HCT116 (cell line): ENCODE measurements at regions of chr14 and their contacts with region 1.

Region 1: GRCh38 chr14:65164068-65164824 is 61.9 kb upstream of the MAX start:
- DNase-seq: peak; percentile 51
- ATAC-seq: peak; percentile 82
- H3K4me3 ChIP-seq: no peak overlapping the region
- H3K27ac ChIP-seq: no peak overlapping the region
- H3K4me1 ChIP-seq: no peaks in the 10 kb centered on the region
- H3K27me3 ChIP-seq: no peaks in the 10 kb centered on the region
- CTCF ChIP-seq: peak; percentile 44 to 83 (median 81); a peak in 5 of 6 replicates
- POLR2A ChIP-seq: no peak
- RAD21 ChIP-seq: peak; percentile 94

Region 2: DNA sequence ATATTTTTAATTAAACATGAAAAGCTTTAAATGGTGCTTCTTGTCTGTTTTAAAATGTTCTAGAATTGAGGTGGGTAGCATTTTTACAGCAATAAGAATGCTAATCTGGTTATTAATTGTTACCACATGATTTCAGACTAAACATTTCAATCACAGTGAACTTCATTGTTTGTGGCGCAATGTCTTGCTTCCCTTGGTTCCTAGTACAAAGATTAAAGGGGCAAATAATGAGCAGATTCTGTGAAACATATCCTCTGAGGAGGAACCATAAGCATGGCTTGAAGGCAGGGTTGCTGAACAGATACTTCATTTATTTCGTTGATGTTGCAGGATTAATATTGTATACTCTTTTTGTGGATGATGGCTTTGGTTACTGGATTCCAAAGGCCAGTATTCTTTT is 410.4 kb after region 1 on chr14:
- CTCF ChIA-PET with region 1: no interaction called
- POLR2A ChIA-PET with region 1: no interaction called
- RAD21 ChIA-PET with region 1: no interaction called
- intact Hi-C with region 1: no loop called
- DNase-seq: no peak
- ATAC-seq: no peak
- H3K4me3 ChIP-seq: no peak overlapping the region
- H3K27ac ChIP-seq: no peak overlapping the region
- H3K4me1 ChIP-seq: no peaks in the 10 kb centered on the region
- H3K27me3 ChIP-seq: no peaks in the 10 kb centered on the region
- CTCF ChIP-seq: no peak
- POLR2A ChIP-seq: no peak
- RAD21 ChIP-seq: no peak

Region 3: GRCh38 chr14:65604936-65605335 is 440.7 kb after region 1 on chr14:
- CTCF ChIA-PET with region 1: no interaction called
- POLR2A ChIA-PET with region 1: no interaction called
- RAD21 ChIA-PET with region 1: no interaction called
- intact Hi-C with region 1: loop called (anchors 1 kb)
- DNase-seq: no peak
- ATAC-seq: no peak
- H3K4me3 ChIP-seq: no peak overlapping the region
- H3K27ac ChIP-seq: no peak overlapping the region
- H3K4me1 ChIP-seq: no peaks in the 10 kb centered on the region
- H3K27me3 ChIP-seq: no peaks in the 10 kb centered on the region
- CTCF ChIP-seq: peak in 2 of 3 experiments; percentile 26 to 34; a peak in 2 of 6 replicates
- POLR2A ChIP-seq: no peak
- RAD21 ChIP-seq: peak; percentile 55

Region 4: DNA sequence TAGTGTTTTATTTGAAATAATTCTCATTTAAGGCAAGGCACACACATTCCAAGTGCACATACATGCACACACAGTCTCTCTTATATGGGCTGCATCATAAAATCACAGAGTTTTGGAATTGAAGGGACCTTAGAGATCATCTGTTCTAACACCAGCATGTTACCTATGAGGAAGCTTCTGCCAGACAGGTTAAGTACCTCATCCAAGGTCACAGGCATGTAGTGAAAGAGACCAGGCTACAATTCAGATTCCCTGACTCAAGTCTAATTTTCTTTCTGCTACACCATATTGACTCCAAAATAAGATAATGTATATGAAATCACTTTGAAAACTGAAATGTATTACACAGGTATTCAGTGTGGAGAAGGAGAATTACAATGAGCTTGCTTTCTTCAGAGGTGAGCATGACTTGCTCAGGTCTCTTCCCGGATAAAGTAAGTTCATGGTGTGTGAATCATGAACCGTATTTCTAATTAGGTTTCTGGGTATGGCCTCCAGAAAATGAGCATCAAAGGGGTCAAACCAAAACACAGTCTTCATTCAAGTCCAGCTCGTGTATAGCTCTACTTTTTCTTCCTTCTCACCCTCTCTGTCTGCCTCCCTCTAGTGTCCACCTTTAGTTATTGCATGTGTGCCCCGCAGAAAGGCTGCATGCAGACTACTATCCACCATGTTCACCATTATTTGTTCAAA is 660.2 kb after region 1 on chr14:
- CTCF ChIA-PET with region 1: interaction called, 30 read pairs
- POLR2A ChIA-PET with region 1: no interaction called
- RAD21 ChIA-PET with region 1: interaction called in 1 of 2 experiments, 11 read pairs
- intact Hi-C with region 1: loop called (anchors 2 kb)
- DNase-seq: peak; percentile 56
- ATAC-seq: peak; percentile 94
- H3K4me3 ChIP-seq: no peak overlapping the region
- H3K27ac ChIP-seq: no peak overlapping the region
- H3K4me1 ChIP-seq: no peaks in the 10 kb centered on the region
- H3K27me3 ChIP-seq: peaks cover 20% of the 10 kb centered on the region; the same call in 1 of the 2 replicates
- CTCF ChIP-seq: peak; percentile 64 to 93 (median 87); a peak in 5 of 6 replicates
- POLR2A ChIP-seq: no peak
- RAD21 ChIP-seq: peak; percentile 80

Region 5: DNA sequence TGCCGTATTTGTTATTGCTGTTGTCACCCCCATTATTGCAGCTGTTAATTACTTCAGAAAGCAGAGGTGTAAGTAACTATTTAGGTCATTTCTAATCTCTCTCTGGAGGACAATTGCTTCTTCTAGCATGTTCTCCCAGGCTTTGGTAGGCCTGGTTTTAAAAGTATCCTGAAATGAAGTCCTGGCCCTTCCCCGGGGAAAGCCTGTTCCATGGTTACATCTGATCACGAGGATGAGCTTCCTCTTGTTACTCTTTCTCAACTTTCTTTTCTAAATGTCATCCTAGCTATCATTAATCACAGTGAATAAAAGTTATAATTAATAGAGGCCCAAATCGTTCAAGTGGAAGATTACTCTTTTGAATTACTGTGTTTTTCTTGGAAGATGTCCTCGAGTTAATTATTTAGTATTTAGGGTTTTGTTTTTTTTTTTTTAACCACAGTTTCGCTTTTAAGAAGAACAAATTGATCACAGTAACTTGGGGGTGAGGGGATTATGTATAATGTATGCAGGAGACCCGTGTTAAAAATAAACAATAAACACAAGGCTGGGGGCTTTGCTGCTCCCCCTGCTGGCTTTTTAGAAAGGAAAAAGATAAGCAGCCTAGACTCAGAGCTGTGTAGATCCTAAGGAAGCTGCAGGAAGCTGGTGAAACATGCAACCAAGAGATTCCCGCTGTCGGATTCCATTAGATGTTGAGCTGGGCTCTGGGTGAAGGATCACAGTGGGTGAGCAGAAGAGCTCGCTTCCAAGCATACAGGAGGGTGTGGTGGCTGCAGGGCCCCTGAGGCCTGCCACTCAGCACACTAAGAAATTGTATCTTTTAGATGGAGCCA is 668.4 kb after region 1 on chr14:
- CTCF ChIA-PET with region 1: interaction called, 14 read pairs
- POLR2A ChIA-PET with region 1: no interaction called
- RAD21 ChIA-PET with region 1: no interaction called
- intact Hi-C with region 1: no loop called
- DNase-seq: no peak
- ATAC-seq: peak; percentile 69
- H3K4me3 ChIP-seq: no peak overlapping the region
- H3K27ac ChIP-seq: no peak overlapping the region
- H3K4me1 ChIP-seq: no peaks in the 10 kb centered on the region
- H3K27me3 ChIP-seq: 0 out of 2 replicates have a peak, but pooled peaks cover 8% of the 10 kb centered on the region
- CTCF ChIP-seq: peak; percentile 18 to 42 (median 39); a peak in 4 of 6 replicates
- POLR2A ChIP-seq: no peak
- RAD21 ChIP-seq: no peak

Region 6: DNA sequence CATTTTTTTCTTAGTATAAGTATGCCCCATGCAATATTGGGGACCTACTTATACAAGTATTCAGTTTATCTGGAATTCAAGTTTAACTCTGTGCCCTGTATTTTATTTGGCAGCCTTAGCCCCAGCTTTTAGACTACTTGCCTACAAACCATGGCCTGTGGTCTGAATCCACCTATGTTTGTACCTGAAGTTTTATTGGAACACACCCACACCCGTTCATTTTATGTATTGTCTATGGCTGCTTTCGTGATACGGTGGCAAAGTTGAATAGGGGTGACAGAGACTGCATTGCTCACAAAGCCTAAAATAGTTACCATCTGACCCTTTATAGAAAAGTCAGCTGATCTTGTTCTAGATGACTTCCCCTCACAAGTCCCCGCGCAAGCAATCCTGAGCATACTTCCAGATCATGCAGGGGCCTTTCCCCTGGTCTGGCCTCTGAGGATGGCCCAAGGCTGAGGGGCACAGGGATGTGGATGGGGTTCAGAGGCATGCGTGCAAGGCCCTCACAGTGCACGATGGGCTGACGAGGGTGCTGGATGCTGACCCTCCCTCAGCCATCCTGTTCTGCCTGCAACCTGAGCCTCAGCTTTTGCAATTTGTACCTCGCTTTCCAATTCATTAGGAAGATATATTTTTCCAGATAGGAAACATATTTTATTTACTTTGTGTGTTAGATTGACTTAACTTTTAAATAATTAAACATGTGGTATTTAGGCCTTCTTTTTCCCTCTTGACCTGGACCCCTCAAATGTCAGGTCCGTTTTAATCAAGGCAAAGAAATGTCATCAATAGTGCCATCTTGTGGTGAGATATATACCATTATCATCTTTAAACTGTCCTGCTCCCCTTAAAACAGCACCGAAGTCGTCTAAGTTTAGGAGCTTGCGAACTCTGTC is 794.7 kb after region 1 on chr14:
- CTCF ChIA-PET with region 1: interaction called, 26 read pairs
- POLR2A ChIA-PET with region 1: interaction called, 4 read pairs
- RAD21 ChIA-PET with region 1: interaction called in 1 of 2 experiments, 4 read pairs
- intact Hi-C with region 1: loop called (anchors 1 kb)
- DNase-seq: peak; percentile 15
- ATAC-seq: peak; percentile 62
- H3K4me3 ChIP-seq: no peak overlapping the region
- H3K27ac ChIP-seq: no peak overlapping the region
- H3K4me1 ChIP-seq: no peaks in the 10 kb centered on the region
- H3K27me3 ChIP-seq: no peaks in the 10 kb centered on the region; the same call in 1 of the 2 replicates
- CTCF ChIP-seq: peak; percentile 23 to 63 (median 42); a peak in 3 of 6 replicates
- POLR2A ChIP-seq: no peak
- RAD21 ChIP-seq: peak; percentile 62

Region 7: DNA sequence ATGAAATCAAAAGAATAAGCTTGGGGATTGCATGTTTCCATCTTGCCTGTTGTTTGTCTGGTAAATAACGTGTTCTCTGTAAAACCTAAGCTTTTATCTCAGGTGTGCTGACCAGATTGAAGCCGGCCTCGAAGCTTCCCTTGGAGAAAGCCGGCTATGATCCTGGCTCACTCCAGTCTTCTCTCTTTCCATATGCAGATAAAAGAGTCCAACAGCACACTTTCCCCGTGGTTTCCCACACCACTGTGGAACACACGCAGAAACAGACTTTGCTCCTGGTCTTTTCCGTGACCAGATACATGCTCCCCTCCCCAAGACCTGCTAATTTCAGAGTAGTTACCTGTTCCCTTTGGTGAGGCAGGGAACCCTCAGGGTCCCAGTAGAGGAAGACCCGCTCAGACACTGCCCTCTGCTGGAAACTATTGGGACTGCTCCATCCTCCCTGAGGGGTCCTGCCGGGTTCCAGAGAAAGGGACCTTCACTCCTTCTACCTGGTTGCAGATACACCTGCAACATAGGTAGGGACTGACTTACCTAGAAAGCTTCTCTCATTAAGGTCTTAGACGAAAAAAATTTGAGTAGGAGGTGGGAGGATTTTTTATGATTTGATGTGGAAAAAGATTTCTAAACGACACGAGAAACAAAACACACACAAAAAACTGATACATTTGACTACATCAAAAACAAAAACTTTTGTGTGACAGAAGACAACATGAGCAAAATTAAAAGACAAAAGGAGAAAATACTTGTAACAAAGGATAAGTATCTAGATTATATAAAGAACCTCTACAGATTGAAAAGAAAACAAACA is 906.5 kb after region 1 on chr14:
- CTCF ChIA-PET with region 1: interaction called, 10 read pairs
- POLR2A ChIA-PET with region 1: no interaction called
- RAD21 ChIA-PET with region 1: no interaction called
- intact Hi-C with region 1: loop called (anchors 1 kb)
- DNase-seq: peak; percentile 35
- ATAC-seq: peak; percentile 96
- H3K4me3 ChIP-seq: no peak overlapping the region
- H3K27ac ChIP-seq: no peak overlapping the region
- H3K4me1 ChIP-seq: no peaks in the 10 kb centered on the region
- H3K27me3 ChIP-seq: no peaks in the 10 kb centered on the region
- CTCF ChIP-seq: peak; percentile 56 to 98 (median 94); a peak in 5 of 6 replicates
- POLR2A ChIP-seq: no peak
- RAD21 ChIP-seq: peak; percentile 81

Region 8: DNA sequence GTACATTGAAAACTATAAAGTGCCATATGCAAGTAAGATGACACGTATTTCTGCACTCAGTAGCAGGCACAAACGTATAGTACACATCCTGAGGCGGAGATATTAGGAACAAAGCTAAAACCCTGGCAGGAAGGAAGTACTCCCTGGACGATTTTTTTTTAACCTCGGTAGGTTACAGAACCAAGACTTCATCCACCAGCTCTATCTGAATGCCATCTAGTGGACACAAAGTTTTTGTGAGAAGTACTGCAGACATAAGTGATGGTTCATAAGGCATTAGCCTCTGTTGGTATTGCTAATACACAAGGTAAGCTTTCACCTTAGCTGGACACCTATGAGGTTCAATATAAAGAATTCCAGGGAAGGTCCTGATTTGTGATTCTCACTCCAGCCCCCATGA is 1238.9 kb after region 1 on chr14:
- CTCF ChIA-PET with region 1: interaction called, 5 read pairs
- POLR2A ChIA-PET with region 1: no interaction called
- RAD21 ChIA-PET with region 1: no interaction called
- intact Hi-C with region 1: loop called (anchors 5 kb)
- DNase-seq: no peak
- ATAC-seq: peak; percentile 78
- H3K4me3 ChIP-seq: no peak overlapping the region
- H3K27ac ChIP-seq: no peak overlapping the region
- H3K4me1 ChIP-seq: no peaks in the 10 kb centered on the region
- H3K27me3 ChIP-seq: no peaks in the 10 kb centered on the region
- CTCF ChIP-seq: peak; percentile 41 to 52 (median 52); a peak in 4 of 6 replicates
- POLR2A ChIP-seq: no peak
- RAD21 ChIP-seq: peak; percentile 50